ENCODE measurements at regions of chr6 and their contacts with region 1.

Region 1: GRCh38 chr6:108174371-108175175 is 8.8 kb downstream of the NR2E1 start:
- DNase-seq: no peak
- H3K4me3 Mint-ChIP-seq: no peak overlapping the region
- H3K27ac Mint-ChIP-seq: no peak overlapping the region
- H3K4me1 Mint-ChIP-seq: peaks cover 7% of the 10 kb centered on the region
- H3K27me3 Mint-ChIP-seq: peaks cover 88% of the 10 kb centered on the region

Region 2: DNA sequence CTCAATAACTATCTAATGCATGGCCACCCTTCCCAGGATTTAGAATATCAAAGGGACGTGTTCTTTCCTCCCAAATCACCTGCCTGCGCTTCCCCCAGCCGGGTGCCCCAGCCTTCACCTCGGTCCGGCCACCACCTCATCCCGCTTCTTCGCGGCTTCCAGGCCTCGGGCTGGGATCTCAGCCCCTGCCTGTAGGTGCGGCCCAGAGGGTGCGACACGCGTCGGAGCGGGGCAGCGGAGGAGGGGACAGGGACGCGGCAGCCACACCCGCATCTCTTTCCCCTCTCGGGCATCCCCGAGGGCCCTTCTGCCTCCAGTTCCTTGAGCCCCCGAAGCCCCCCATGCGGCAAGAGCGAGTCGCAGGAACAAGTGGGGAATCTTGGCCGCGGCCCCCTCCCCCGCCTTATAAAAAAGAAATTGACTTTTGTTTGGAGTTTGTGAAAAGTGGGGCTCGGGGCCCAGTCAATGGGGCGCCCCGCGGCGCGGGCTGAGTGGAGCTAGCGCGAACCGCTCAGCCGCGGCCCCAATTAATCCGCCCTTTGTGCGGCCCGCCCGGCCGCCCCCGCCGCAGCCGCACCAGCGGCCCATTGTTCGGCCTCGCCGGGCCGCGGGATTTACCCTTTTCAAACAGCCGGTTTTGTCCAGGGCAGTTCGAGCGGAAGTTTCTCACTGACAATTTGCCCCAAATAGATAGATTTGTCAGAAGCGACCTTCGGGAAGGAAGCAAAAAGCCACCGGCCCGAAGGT is 17.2 kb before region 1 on chr6:
- intact Hi-C with region 1: loop called (anchors 2 kb)
- DNase-seq: no peak
- H3K4me3 Mint-ChIP-seq: no peak overlapping the region
- H3K27ac Mint-ChIP-seq: no peak overlapping the region
- H3K4me1 Mint-ChIP-seq: peaks cover 3% of the 10 kb centered on the region
- H3K27me3 Mint-ChIP-seq: peaks cover 85% of the 10 kb centered on the region

Region 3: GRCh38 chr6:108365478-108365877 is 190.9 kb after region 1 on chr6:
- intact Hi-C with region 1: no loop called
- DNase-seq: no peak
- H3K4me3 Mint-ChIP-seq: no peak overlapping the region
- H3K27ac Mint-ChIP-seq: no peak overlapping the region
- H3K4me1 Mint-ChIP-seq: no peaks in the 10 kb centered on the region
- H3K27me3 Mint-ChIP-seq: no peaks in the 10 kb centered on the region

Region 4: GRCh38 chr6:108492131-108492766 is 317.7 kb after region 1 on chr6:
- intact Hi-C with region 1: loop called (anchors 5 kb)
- DNase-seq: no peak
- H3K4me3 Mint-ChIP-seq: no peak overlapping the region
- H3K27ac Mint-ChIP-seq: no peak overlapping the region
- H3K4me1 Mint-ChIP-seq: no peaks in the 10 kb centered on the region
- H3K27me3 Mint-ChIP-seq: peaks cover 19% of the 10 kb centered on the region

Region 5: GRCh38 chr6:108526739-108527174 is 352.2 kb after region 1 on chr6:
- intact Hi-C with region 1: loop called (anchors 5 kb)
- DNase-seq: no peak
- H3K4me3 Mint-ChIP-seq: no peak overlapping the region
- H3K27ac Mint-ChIP-seq: no peak overlapping the region
- H3K4me1 Mint-ChIP-seq: no peaks in the 10 kb centered on the region
- H3K27me3 Mint-ChIP-seq: peaks cover 22% of the 10 kb centered on the region

Measured in activated T-helper 2 cell treated with anti-CD3 and anti-CD28 coated beads, Interferon-gamma antibody, Interleukin-2, Interleukin-4, amounts not matched to agents 10 μg/mL and 5 μg/mL and 100 μg/mL, durations not matched to agents 14 hours and 24 hours and 36 hours (primary cell).